ENCODE measurements at regions of chr22 and their contacts with region 1.

Region 1: DNA sequence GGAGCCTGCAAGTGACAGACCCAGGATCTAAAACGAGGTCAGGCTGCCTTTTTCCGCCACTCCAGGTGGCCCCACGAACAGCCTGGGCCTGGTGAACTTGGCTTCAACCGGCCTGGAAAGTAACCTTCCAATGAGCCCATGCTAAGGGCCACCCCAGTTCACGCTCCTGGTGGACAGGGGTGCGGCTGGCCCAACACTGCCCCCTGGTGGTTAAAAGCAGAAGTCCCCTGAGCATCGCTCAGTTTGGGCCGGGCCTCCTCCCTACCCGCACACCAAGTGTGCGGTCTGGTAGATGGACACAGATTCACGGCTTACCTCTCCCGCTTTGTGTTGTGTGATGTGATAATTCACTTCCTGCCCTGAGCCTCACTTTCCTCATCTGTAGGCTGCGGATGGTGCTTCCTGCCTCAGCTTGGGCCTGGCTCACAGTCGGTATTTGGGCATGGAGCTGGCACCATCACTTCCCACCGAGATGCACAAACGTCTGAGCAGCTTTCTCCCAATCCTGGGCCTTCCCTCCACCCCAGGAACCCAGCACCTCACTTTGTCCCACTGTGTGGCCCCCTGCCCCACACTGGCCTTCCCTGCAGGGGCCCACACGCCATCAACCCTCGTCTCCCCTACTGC is 13.7 kb upstream of the SEC14L3 start:
- DNase-seq: peak; percentile 86
- H3K4me3 ChIP-seq: no peak overlapping the region
- H3K27ac ChIP-seq: no peak overlapping the region
- H3K4me1 ChIP-seq: peaks cover 0 to 6% (median 1%) of the 10 kb centered on the region in 6 donors
- H3K27me3 ChIP-seq: peaks cover 0 to 7% (median 0%) of the 10 kb centered on the region in 7 donors
- CTCF ChIP-seq: peak; percentile 87 to 98 (median 97)
- POLR2A ChIP-seq: no peak

Region 2: GRCh38 chr22:30262917-30263741 is 222.3 kb before region 1 on chr22:
- intact Hi-C with region 1: loop called (anchors 10 kb)
- DNase-seq: peak; percentile 92
- H3K4me3 ChIP-seq: peak overlapping the region in 5 of 8 donors; percentile 4 to 59 (median 5)
- H3K27ac ChIP-seq: peak overlapping the region in 7 of 8 donors; percentile 7 to 98 (median 73)
- H3K4me1 ChIP-seq: peaks cover 9 to 88% (median 46%) of the 10 kb centered on the region in 6 donors
- H3K27me3 ChIP-seq: no peaks in the 10 kb centered on the region
- CTCF ChIP-seq: peak; percentile 83 to 99 (median 94)
- POLR2A ChIP-seq: no peak